Activated CD8-positive, alpha-beta T cell treated with anti-CD3 and anti-CD28 coated beads, Interleukin-2, amount 10 ng/mL, durations not matched to agents 7 days and 5 days (primary cell): ENCODE measurements at regions of chr12 and their contacts with region 1.

Region 1: DNA sequence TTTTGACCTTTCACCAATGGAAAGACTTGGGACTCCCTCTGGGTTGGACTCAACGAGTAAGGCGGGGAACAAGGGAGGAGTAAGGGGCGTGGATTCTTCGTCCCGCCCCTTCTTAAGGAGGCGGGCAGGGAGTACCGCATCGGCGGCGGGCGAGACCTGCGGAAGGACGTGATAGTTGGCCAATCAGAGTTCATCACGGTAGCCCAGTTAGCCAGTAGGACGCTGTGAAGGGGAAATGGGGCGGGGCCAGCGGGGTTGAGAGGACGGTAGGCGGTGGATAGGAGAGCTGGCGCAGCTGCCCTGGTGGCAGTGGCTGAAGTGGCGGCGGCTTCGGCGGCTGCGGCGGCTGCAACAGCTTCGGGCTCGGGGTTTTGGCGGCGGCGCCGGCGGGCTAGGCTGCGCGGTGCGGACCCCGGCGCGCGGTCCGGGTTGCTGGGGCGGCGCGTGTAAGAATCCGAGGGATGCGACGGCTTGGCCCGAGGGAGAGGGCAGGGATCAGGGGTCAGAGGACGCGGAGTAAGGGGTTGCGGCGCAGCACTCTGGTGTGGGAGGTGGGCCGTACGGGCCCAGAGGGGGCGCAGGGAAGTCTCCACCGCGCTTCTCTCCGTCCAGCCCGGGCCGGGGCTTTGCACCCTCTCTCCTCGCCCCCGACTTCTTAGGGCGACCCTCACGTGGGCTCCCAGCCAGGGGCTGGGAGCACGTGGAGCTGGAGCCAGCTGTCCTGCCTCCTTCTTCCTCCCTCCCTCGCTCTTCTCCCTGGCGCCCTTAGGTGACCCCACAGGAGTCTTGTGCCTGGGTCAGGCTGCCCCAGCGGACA is at the start of gene TPCN1:
- DNase-seq: peak; percentile 100
- ATAC-seq: peak; percentile 96
- H3K4me3 Mint-ChIP-seq: peak within 1 kb of the TSS; percentile 78
- H3K27ac Mint-ChIP-seq: peak within 1 kb of the TSS; percentile 83
- H3K4me1 Mint-ChIP-seq: peaks cover 40% of the 10 kb centered on the region
- H3K27me3 Mint-ChIP-seq: peaks cover 3% of the 10 kb centered on the region
- total RNA-seq, gene TPCN1: 13.7 to 16.1 TPM

Region 2: GRCh38 chr12:113208041-113208934 is 13.1 kb before region 1 on chr12:
- CTCF ChIA-PET with region 1: interaction called, 17 read pairs
- POLR2A ChIA-PET with region 1: interaction called, 22 read pairs
- DNase-seq: peak; percentile 90
- ATAC-seq: peak; percentile 82
- H3K4me3 Mint-ChIP-seq: peak overlapping the region; percentile 56
- H3K27ac Mint-ChIP-seq: peak overlapping the region; percentile 93
- H3K4me1 Mint-ChIP-seq: peaks cover 67% of the 10 kb centered on the region
- H3K27me3 Mint-ChIP-seq: no peaks in the 10 kb centered on the region